ENCODE measurements at regions of chr16 and their contacts with region 1.

Region 1: DNA sequence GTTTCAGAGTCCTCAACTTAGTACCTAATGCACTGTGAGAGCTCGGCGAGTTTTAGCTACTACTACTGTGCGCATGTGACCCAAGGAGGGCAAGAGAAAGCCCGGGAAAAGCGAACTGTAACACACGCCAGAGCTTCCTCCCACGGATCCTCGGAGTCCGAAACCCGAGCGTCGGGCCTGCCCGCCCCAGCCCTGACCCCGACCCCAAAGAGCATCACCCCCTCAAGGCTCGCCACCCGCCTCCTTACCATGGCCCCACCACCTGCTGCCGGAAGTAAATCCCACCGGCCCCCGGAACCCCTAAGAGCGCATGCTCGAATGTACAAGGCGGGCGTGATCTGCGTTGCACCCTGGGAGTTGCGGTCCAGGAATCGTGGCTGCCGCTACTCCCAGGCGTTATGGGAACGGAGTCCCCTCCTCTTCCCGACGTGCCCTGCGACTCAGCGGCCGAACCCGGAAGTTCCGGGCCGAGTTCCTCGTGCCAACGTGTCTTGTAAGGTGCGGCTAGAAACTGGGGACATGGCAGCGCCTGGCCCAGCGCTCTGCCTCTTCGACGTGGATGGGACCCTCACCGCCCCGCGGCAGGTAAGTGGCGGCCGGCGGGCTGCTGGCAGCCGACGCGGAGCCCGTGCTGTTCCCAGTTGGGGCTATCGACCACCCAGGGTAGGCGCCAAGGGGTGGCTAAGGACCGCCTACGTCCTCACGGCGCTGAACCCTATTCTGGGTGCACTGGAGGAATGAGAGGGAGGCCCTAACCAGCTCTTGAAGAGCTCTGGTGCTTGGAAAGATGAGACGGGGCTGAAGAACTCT is at the starts of genes PMM2 and TMEM186:
- DNase-seq: peak; percentile 96 to 98
- ATAC-seq: peak; percentile 92
- total RNA-seq, gene PMM2: 55.1 to 92.4 TPM
- total RNA-seq, gene TMEM186: 12.1 to 14.3 TPM

Region 2: GRCh38 chr16:8572919-8573724 is 224.4 kb before region 1 on chr16:
- intact Hi-C with region 1: loop called in 1 of 2 experiments (anchors 10 kb)
- DNase-seq: no peak
- ATAC-seq: peak; percentile 58

Region 3: DNA sequence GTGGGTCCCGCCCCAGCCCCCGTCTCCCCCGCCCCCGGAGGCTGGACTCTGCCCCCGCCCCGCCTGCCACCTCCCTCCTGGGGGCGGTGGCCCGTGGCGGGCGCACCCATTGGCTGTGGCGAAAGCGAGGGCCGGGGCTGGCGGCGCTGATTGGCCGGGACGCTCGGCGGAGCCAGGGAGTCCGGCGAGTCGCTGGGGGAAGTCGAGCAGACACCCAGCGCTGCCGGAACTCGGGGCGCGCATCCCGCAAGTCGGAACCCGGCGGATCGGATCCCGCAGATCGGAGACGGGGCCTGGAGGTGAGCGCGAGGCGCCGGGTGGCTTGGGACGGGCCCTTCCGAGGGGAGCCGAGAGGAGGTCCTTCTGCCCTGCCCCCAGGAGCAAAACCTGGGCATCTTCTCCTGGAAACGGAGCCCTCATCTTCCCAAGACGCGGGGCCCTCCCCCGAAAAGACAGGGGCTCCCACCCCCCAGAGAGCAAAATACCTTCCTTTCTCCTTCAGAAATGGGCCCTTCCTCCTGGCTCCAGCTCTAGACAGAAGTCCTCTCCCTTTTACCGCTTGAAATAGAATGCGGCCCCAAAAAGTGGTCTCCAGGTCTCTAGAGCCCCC is 123.1 kb before region 1 on chr16 and contains the start of gene ABAT:
- intact Hi-C with region 1: loop called in 1 of 2 experiments (anchors 10 kb)
- DNase-seq: peak; percentile 90 to 92
- ATAC-seq: peak; percentile 99
- total RNA-seq, gene ABAT: 9.2 to 24.2 TPM

Region 4: DNA sequence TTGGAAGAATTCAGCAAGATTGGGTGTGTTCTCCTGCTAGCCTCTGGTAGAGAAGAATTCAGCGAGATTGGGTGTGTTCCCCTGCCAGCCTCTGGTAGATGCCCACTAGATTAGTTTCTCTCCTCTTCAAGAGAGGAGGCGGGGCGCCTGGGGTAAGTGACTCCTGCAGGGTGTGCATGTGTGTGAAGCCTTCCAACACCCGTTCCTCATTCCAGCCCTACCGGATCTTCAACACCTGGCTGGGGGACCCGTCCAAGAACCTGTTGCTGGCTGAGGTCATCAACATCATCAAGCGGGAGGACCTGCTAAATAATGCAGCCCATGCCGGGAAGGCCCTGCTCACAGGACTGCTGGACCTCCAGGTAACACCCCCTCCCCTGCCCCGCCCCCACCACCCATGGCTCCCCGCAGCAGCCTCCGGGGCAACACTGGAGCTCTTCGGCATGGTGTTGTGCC is 21.4 kb before region 1 on chr16:
- intact Hi-C with region 1: no loop called
- DNase-seq: peak in 1 of 2 donors; percentile 31
- ATAC-seq: no peak